ENCODE measurements at regions of chr21 and their contacts with region 1.

Region 1: DNA sequence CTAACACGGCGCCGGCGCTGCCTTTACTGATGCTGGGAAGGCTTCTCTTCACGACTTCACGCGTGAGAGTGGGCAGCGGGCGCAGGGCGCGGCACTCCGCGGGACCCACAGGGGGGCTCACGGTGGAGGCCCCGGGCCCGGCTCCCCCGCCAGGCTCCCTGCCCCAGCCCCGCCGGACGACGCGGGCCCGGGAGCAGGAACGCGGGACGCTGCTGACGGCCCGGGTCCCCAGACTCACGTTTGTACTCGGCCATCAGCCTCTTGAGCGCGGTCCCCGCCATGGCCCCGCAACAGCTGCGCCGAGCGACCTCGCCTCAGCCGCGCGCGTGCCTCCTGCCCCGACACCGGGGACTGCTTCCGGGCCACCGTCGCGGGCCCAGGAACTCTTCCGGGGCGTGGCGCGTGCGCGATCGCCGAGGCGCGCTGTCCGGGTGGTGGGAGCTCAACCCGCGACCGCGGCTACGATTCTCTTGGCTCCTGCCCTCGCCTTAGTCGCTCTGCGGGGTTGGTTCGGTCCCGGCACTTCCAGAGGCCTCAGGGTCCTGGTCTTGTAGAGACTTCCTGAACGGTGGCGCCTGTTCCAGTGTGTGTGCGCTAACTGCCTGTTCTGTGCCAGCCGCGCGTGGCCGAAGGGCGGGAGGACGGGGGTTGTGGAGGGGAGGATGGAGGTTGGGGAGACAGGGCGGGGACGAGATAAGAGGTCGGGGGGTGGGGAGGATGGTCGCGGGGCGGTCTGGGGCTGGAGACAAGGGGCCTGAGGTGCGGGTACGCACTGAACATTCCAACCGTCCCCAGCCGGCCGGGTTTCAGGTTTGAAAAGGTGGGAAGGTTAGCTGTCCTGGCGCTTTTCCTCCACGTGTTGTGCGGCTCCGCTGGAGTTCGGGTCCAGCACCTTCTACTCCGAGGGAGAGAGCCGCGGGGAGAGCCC is at the start of gene UBE2G2:
- DNase-seq: peak in 1 of 2 experiments; percentile 91
- H3K4me3 ChIP-seq: peak within 1 kb of the TSS; percentile 59 to 93 (median 80)
- H3K27ac ChIP-seq: peak within 1 kb of the TSS; percentile 75; the same call in 1 of the 2 replicates
- H3K4me1 ChIP-seq: peaks cover 0 to 12% (median 1%) of the 10 kb centered on the region in 4 experiments; a peak in 3 of 7 replicates
- H3K27me3 ChIP-seq: no peaks in the 10 kb centered on the region
- CTCF ChIP-seq: no peak
- EP300 ChIP-seq: no peak
- POLR2A ChIP-seq: peak in 1 of 2 experiments; percentile 68; a peak in 1 of 3 replicates
- RAD21 ChIP-seq: no peak
- total RNA-seq, gene UBE2G2: 93.0 and 101 TPM in 2 replicates

Region 2: GRCh38 chr21:44815852-44816628 is 14.3 kb after region 1 on chr21:
- CTCF ChIA-PET with region 1: interaction called, 6 read pairs
- POLR2A ChIA-PET with region 1: interaction called, 72 read pairs
- DNase-seq: no peak
- H3K4me3 ChIP-seq: no peak overlapping the region
- H3K27ac ChIP-seq: no peak overlapping the region
- H3K4me1 ChIP-seq: peaks cover 0 to 18% (median 5%) of the 10 kb centered on the region in 4 experiments; a peak in 4 of 7 replicates
- H3K27me3 ChIP-seq: peaks cover 0 to 10% (median 7%) of the 10 kb centered on the region in 4 experiments; a peak in 5 of 7 replicates
- CTCF ChIP-seq: no peak
- EP300 ChIP-seq: no peak
- POLR2A ChIP-seq: no peak
- RAD21 ChIP-seq: no peak

Region 3: GRCh38 chr21:44831227-44831860 is 29.6 kb after region 1 on chr21:
- CTCF ChIA-PET with region 1: no interaction called
- POLR2A ChIA-PET with region 1: no interaction called
- DNase-seq: no peak
- H3K4me3 ChIP-seq: no peak overlapping the region
- H3K27ac ChIP-seq: no peak overlapping the region
- H3K4me1 ChIP-seq: no peaks in the 10 kb centered on the region
- H3K27me3 ChIP-seq: no peaks in the 10 kb centered on the region; a peak in 1 of 7 replicates
- CTCF ChIP-seq: no peak
- EP300 ChIP-seq: no peak
- POLR2A ChIP-seq: no peak
- RAD21 ChIP-seq: no peak

Region 4: DNA sequence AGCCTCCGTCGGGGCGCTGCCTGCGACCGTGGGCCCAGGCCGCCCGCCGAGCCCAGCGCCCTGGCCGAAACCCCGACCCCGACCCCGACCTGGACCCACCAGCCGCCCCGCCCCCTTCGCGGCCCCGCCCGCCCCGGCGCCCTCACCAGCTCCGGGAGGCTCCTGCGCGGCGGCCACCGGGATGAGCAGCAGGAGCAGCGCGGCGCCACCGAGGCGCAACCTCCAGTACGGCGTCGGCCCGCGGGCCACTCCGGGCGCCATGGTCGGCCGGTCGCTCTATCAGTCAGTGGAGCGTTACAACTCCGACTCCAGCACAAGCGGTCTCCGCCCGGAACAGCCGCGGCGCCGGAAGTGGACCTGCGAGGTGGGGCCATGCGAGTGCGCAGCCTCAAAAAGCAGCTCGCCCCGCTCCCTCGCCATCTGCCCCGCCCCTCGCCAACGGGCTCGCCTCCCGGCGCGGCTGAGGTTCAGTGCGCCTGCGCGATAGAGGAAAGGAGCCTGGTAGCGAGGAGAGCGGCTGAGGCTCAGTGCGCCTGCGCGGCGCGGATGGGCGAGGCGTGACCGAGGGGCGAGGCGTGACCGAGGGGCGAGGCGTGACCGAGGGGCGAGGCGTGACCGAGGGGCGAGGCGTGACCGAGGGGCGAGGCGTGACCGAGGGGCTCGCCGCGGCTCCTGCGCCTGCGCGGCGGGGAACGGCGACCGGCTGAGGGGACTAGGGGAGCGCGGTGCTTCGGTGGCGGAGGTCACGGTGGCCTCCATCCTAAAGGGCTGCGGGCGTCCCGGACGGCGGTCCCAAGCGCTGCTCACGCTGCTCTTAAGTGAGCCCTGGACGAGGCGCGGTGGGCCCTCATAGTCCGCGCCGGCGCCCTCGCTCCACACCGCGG is 71.9 kb after region 1 on chr21 and contains the start of gene PTTG1IP:
- CTCF ChIA-PET with region 1: interaction called, 7 read pairs
- POLR2A ChIA-PET with region 1: interaction called, 16 read pairs
- DNase-seq: peak; percentile 91 to 98
- H3K4me3 ChIP-seq: peak within 1 kb of the TSS; percentile 71 to 95 (median 78)
- H3K27ac ChIP-seq: peak within 1 kb of the TSS; percentile 30
- H3K4me1 ChIP-seq: peaks cover 6 to 9% (median 7%) of the 10 kb centered on the region in 4 experiments
- H3K27me3 ChIP-seq: peaks cover 0 to 19% (median 15%) of the 10 kb centered on the region in 4 experiments; a peak in 5 of 7 replicates
- CTCF ChIP-seq: no peak
- EP300 ChIP-seq: no peak
- POLR2A ChIP-seq: peak in 1 of 2 experiments; percentile 62; a peak in 2 of 3 replicates
- RAD21 ChIP-seq: no peak
- total RNA-seq, gene PTTG1IP: 124 and 130 TPM in 2 replicates

Measured in H1 (cell line).